Activated CD8-positive, alpha-beta T cell treated with anti-CD3 and anti-CD28 coated beads, Interleukin-2, amount 10 ng/mL, durations not matched to agents 7 days and 5 days (primary cell): ENCODE measurements at regions of chr1 and their contacts with region 1.

Region 1: DNA sequence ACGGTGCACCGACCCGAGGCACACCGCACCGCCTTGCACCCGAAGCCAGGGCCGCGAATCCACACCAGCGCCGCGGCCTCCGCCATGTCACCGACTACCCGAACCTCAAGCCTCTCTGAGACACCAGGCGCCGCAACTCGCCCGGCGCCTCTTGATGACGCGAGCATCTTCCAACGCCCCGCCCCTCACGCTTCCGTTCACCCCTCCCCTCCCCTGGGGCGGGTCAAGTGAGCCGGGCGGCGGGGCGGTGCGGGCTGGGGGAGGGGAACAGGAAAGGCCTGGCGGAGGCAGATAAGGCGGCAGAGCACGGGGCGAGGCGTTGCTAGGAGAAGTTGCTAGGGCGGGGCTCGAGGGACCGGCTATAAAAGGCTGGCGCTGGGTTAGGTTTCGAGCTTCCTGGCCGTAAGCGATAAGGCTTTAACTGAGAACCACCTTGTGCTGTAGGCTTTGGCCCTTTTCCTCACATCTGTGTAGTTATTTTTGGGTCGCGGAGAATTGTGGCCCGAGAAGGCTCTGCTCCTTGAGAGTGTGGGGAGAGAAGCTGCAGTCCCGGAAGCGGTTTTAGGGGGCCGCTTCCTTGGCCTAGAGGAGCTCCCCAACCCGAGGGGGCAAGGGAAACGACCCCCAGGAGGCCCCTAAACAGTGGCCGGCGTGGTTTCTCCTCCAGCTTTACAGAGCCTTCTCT is at the start of gene SDE2:
- DNase-seq: peak; percentile 100
- ATAC-seq: peak; percentile 77
- H3K4me3 Mint-ChIP-seq: peak within 1 kb of the TSS; percentile 100
- H3K27ac Mint-ChIP-seq: peak within 1 kb of the TSS; percentile 100
- H3K4me1 Mint-ChIP-seq: peaks cover 78% of the 10 kb centered on the region
- H3K27me3 Mint-ChIP-seq: no peaks in the 10 kb centered on the region
- total RNA-seq, gene SDE2: 15.4 to 16.9 TPM

Region 2: GRCh38 chr1:225881969-225882693 is 117.2 kb before region 1 on chr1 and contains the start of gene TMEM63A:
- CTCF ChIA-PET with region 1: interaction called, 3 read pairs
- POLR2A ChIA-PET with region 1: interaction called, 11 read pairs
- DNase-seq: peak; percentile 93
- ATAC-seq: peak; percentile 83
- H3K4me3 Mint-ChIP-seq: peak within 1 kb of the TSS; percentile 87
- H3K27ac Mint-ChIP-seq: peak within 1 kb of the TSS; percentile 92
- H3K4me1 Mint-ChIP-seq: peaks cover 56% of the 10 kb centered on the region
- H3K27me3 Mint-ChIP-seq: peaks cover 8% of the 10 kb centered on the region
- total RNA-seq, gene TMEM63A: 83.5 to 85.8 TPM

Region 3: DNA sequence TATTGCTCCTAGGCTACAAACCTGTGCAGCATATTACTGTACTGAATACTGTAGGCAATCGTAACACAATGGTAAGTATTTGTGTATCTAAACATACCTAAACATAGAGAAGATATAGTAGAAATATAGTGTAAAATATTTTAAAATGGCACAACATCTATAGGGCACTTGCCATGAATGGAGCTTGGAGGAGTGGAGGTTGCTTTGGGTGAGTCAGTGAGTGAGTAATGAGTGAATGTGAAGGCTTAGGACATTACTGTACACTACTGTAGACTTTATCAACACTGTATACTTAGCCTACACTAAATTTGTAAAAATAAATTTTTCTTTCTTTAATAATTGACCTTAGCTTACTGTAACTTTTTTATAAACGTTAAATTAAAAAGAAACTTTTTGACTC is 66.3 kb before region 1 on chr1:
- CTCF ChIA-PET with region 1: no interaction called
- POLR2A ChIA-PET with region 1: no interaction called
- DNase-seq: no peak
- ATAC-seq: no peak
- H3K4me3 Mint-ChIP-seq: no peak overlapping the region
- H3K27ac Mint-ChIP-seq: no peak overlapping the region
- H3K4me1 Mint-ChIP-seq: peaks cover 14% of the 10 kb centered on the region
- H3K27me3 Mint-ChIP-seq: no peaks in the 10 kb centered on the region

Region 4: GRCh38 chr1:225977937-225978748 is 21.2 kb before region 1 on chr1:
- CTCF ChIA-PET with region 1: interaction called, 3 read pairs
- POLR2A ChIA-PET with region 1: interaction called, 18 read pairs
- DNase-seq: no peak
- ATAC-seq: no peak
- H3K4me3 Mint-ChIP-seq: no peak overlapping the region
- H3K27ac Mint-ChIP-seq: no peak overlapping the region
- H3K4me1 Mint-ChIP-seq: peaks cover 13% of the 10 kb centered on the region
- H3K27me3 Mint-ChIP-seq: no peaks in the 10 kb centered on the region

Region 5: GRCh38 chr1:225987491-225988316 is 11.7 kb before region 1 on chr1:
- CTCF ChIA-PET with region 1: interaction called, 24 read pairs
- POLR2A ChIA-PET with region 1: interaction called, 29 read pairs
- DNase-seq: no peak
- ATAC-seq: no peak
- H3K4me3 Mint-ChIP-seq: no peak overlapping the region
- H3K27ac Mint-ChIP-seq: no peak overlapping the region
- H3K4me1 Mint-ChIP-seq: peaks cover 32% of the 10 kb centered on the region
- H3K27me3 Mint-ChIP-seq: no peaks in the 10 kb centered on the region

Region 6: GRCh38 chr1:226051356-226051755 is 52.0 kb after region 1 on chr1:
- CTCF ChIA-PET with region 1: no interaction called
- POLR2A ChIA-PET with region 1: interaction called, 10 read pairs
- DNase-seq: no peak
- ATAC-seq: no peak
- H3K4me3 Mint-ChIP-seq: no peak overlapping the region
- H3K27ac Mint-ChIP-seq: no peak overlapping the region
- H3K4me1 Mint-ChIP-seq: no peaks in the 10 kb centered on the region
- H3K27me3 Mint-ChIP-seq: peaks cover 2% of the 10 kb centered on the region

Region 7: GRCh38 chr1:226109829-226110248 is 110.5 kb after region 1 on chr1:
- CTCF ChIA-PET with region 1: no interaction called
- POLR2A ChIA-PET with region 1: interaction called, 12 read pairs
- DNase-seq: peak; percentile 85
- ATAC-seq: peak; percentile 87
- H3K4me3 Mint-ChIP-seq: peak overlapping the region; percentile 85
- H3K27ac Mint-ChIP-seq: peak overlapping the region; percentile 85
- H3K4me1 Mint-ChIP-seq: peaks cover 21% of the 10 kb centered on the region
- H3K27me3 Mint-ChIP-seq: peaks cover 3% of the 10 kb centered on the region